ENCODE measurements at regions of chr1 and their contacts with region 1.

Region 1: GRCh38 chr1:109790735-109791494 is 27.2 kb upstream of the EPS8L3 start:
- DNase-seq: peak; percentile 86

Region 2: DNA sequence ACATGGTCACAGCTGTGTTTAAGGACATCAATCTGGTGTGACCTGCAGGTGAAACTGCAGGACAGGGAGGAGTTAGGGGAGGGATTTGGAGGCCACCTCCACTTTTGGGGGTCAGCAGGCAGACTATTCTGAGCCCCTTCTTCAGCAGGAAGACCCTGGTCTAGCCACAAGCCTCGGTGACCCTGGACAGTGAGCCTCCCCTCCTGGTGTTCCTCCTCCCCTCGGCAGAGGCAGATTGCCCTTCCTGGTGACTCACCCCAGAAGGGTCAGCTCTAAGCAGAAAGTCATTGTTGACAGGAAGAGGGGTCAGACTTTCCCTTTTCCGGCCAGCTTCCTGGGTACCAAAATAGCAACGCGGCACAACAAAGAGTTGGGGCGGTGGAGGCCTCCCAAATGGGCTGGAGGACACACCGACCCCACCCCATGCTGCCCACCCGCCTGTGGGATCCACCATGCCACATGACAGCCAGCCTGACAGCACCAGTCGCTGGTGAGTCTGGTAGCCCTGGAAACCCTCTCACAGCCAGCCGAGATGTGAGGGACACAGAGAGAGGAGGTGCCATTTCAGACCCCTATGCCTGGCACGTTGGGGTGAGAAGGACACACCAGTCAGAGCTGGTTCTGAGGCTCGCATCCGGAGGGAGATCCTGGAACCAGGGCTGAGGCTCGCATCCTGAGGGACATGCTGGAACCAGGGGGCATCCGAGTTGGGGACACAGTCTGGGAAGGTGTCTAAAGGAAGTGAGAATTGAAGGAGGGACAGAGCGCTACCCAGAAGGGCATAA is 105.0 kb after region 1 on chr1:
- intact Hi-C with region 1: loop called (anchors 5 kb)
- DNase-seq: peak; percentile 91

Region 3: DNA sequence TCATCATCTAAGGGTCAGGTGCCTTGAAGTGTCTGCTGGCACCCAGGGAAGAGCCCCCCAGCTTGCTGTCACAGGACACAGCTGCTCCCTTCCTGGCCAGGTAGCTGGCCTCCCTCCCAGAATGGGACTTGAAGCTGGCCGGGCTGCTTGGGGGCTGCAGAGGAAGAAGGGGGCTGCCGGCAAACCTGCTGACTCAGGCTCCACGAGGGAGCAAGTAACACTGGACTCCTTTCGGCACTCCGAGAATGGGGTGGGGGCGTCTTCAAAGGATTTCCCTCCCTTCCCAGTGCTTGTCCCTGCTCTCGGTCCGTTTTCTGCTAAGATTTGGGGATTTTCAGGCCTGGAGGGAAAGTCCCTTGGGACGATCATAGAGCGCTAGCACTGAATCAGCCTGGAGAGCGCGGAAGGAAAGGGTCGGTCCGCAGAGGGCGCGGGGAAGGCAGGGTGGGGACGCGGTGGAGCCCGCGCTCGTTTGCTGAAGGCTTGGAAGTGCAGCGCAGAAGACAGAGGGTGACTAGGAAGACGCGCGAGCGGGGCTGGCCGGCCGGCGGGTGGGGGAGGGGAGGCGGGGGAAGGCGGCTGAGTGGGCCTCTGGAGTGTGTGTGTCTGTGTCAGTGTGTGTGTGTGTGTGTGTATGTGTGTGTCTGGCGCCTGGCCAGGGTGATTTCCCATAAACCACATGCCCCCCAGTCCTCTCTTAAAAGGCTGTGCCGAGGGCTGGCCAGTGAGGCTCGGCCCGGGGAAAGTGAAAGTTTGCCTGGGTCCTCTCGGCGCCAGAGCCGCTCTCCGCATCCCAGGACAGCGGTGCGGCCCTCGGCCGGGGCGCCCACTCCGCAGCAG is 119.4 kb after region 1 on chr1 and contains the start of gene CSF1:
- intact Hi-C with region 1: loop called (anchors 5 kb)
- DNase-seq: peak; percentile 89
- total RNA-seq, gene CSF1: 16.7 TPM